Activated B cell treated with CpG ODN at 0.5 μM for 24 hours (primary cell): ENCODE measurements at regions of chr3 and their contacts with region 1.

Region 1: DNA sequence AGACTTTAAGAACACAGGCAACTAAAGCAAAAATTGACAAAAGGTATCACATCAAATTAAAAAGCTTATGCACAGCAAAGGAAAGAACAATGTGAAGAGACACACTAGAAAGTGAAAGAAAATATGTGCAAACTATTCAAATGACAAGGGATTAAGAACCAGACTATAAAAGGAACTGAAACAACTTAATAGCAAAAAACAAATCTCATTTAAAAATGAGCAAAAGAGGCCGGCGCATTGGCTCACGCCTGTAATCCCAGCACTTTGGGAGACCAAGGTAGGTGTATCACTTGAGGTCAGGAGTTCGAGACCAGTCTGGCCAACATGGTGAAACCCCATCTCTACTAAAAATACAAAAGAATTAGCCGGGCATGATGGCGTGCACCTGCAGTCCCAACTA is 14.4 kb downstream of the NGLY1 start:
- DNase-seq: no peak
- ATAC-seq: peak; percentile 92
- H3K4me3 Mint-ChIP-seq: peak overlapping the region; percentile 79
- H3K27ac Mint-ChIP-seq: peak overlapping the region; percentile 92
- H3K4me1 Mint-ChIP-seq: peaks cover 44% of the 10 kb centered on the region
- H3K27me3 Mint-ChIP-seq: no peaks in the 10 kb centered on the region
- CTCF ChIP-seq: no peak

Region 2: GRCh38 chr3:25755257-25755656 is 13.6 kb before region 1 on chr3:
- CTCF ChIA-PET with region 1: no interaction called
- POLR2A ChIA-PET with region 1: no interaction called
- intact Hi-C with region 1: no loop called
- DNase-seq: no peak
- ATAC-seq: no peak
- H3K4me3 Mint-ChIP-seq: no peak overlapping the region
- H3K27ac Mint-ChIP-seq: no peak overlapping the region
- H3K4me1 Mint-ChIP-seq: no peaks in the 10 kb centered on the region
- H3K27me3 Mint-ChIP-seq: no peaks in the 10 kb centered on the region
- CTCF ChIP-seq: no peak

Region 3: DNA sequence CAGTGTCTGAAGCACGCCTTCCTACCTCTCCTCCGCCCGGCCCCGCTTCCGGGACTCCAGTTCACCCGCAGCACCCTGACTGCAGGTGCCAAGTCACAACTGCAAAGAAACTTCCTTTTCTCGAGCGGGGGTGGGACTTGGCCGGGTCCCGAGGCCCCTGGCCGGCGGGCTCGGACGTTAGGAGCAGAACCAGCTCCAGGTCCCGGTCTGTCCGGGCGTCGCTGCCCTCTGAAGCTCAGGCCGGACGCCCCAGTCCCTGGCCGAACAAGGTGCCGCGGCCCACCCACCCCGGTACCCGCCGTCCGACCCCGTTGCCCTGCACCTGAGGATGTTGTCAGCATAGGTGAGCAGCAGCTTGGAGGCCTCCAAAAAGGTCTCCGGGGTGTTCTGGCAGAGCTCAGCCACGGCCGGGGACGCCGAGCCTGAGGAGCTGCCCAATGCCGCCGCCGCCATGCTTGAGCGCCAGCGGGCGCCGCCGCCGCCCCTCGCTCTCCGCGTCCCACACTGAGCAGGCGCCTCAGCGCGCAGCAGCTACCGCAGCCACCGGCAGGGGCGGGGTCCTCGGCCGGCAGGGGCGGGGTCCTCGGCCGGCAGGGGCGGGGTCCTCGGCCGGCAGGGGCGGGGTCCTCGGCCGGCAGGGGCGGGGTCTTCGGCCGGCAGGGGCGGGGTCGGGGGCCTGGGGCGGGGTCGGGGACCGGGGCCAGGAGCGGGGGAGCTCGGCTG is 14.2 kb after region 1 on chr3 and contains the start of gene NGLY1:
- CTCF ChIA-PET with region 1: interaction called, 3 read pairs
- POLR2A ChIA-PET with region 1: interaction called, 40 read pairs
- intact Hi-C with region 1: loop called (anchors 1 kb)
- DNase-seq: peak; percentile 78
- ATAC-seq: peak; percentile 79
- H3K4me3 Mint-ChIP-seq: peak within 1 kb of the TSS; percentile 87
- H3K27ac Mint-ChIP-seq: peak within 1 kb of the TSS; percentile 97
- H3K4me1 Mint-ChIP-seq: peaks cover 48% of the 10 kb centered on the region
- H3K27me3 Mint-ChIP-seq: no peaks in the 10 kb centered on the region
- CTCF ChIP-seq: no peak
- total RNA-seq, gene NGLY1: 104 and 127 TPM in 2 replicates

Region 4: GRCh38 chr3:25789596-25790556 is 21.0 kb after region 1 on chr3 and contains the start of gene OXSM:
- CTCF ChIA-PET with region 1: no interaction called
- POLR2A ChIA-PET with region 1: interaction called, 7 read pairs
- intact Hi-C with region 1: loop called (anchors 1 kb)
- DNase-seq: peak; percentile 82
- ATAC-seq: peak; percentile 90
- H3K4me3 Mint-ChIP-seq: peak within 1 kb of the TSS; percentile 95
- H3K27ac Mint-ChIP-seq: peak within 1 kb of the TSS; percentile 99
- H3K4me1 Mint-ChIP-seq: peaks cover 34% of the 10 kb centered on the region
- H3K27me3 Mint-ChIP-seq: no peaks in the 10 kb centered on the region
- CTCF ChIP-seq: no peak
- total RNA-seq, gene OXSM: 12.6 and 14.2 TPM in 2 replicates

Region 5: GRCh38 chr3:25856902-25857518 is 88.2 kb after region 1 on chr3:
- CTCF ChIA-PET with region 1: interaction called, 6 read pairs
- POLR2A ChIA-PET with region 1: no interaction called
- intact Hi-C with region 1: loop called (anchors 5 kb)
- DNase-seq: no peak
- ATAC-seq: peak; percentile 71
- H3K4me3 Mint-ChIP-seq: no peak overlapping the region
- H3K27ac Mint-ChIP-seq: no peak overlapping the region
- H3K4me1 Mint-ChIP-seq: no peaks in the 10 kb centered on the region
- H3K27me3 Mint-ChIP-seq: no peaks in the 10 kb centered on the region
- CTCF ChIP-seq: peak; percentile 92

Region 6: DNA sequence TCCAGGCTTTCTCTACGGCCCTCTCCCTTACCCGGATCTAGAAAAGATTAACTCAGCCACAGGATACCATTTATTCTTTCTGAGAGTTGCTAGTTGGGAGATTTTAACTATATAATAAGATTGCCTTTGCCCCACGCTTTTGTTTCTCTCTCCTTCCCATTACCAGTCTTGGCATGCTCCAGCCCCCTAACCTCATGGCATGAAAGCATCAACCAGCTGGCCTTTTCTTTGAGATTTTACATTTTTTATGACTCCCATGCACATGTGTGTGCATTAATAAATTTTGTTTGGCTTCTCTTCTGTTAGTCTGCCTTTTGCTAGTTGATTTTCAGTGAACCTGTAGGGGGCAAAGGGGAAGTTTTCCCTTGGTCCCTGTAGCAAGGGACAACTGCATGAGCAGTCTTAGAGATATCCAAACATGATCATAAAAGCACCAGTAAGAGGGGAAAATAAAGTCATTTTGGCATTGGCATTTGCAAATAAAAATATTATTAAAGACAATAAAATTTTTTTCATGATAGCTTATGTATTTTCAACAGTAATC is 94.6 kb after region 1 on chr3:
- CTCF ChIA-PET with region 1: no interaction called
- POLR2A ChIA-PET with region 1: interaction called, 10 read pairs
- intact Hi-C with region 1: loop called (anchors 5 kb)
- DNase-seq: no peak
- ATAC-seq: no peak
- H3K4me3 Mint-ChIP-seq: no peak overlapping the region
- H3K27ac Mint-ChIP-seq: no peak overlapping the region
- H3K4me1 Mint-ChIP-seq: no peaks in the 10 kb centered on the region
- H3K27me3 Mint-ChIP-seq: no peaks in the 10 kb centered on the region
- CTCF ChIP-seq: no peak